ENCODE measurements at regions of chr20 and their contacts with region 1.

Region 1: DNA sequence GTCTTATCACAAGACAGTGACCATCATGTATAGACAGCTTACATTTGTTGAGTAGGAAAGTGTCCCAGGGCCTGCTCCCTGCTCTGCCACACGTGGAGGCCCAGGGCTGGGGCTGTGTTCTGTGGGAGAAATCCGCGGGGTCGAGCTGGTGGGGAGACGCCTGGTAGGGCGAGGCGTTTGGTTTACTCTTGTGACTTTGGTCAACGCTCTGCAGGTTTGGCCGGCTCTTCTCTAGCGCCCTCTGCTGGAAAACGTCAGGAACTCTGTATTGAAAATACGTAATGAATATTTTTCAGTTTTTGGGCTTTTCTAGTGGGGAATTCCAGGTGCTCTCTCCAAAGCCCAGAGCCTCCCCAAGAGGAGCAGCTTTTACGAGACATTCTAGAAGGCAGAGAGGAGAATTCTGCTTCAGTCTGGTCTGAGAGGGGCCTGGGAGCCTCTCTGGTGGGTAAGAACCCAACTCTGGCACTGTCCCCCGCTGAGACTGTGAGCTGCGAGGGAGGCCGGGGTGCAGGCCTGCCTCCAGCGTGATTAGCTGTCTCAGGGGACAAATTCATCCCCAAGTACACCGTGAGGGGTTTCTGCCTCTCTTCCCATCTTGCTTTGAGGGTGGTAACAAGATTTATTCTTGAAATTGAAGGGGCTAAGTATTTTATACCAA is 112.6 kb upstream of the RALGAPA2 start:
- DNase-seq: peak; percentile 35
- H3K4me3 ChIP-seq: no peak overlapping the region
- H3K27ac ChIP-seq: no peak overlapping the region
- H3K4me1 ChIP-seq: no peaks in the 10 kb centered on the region
- H3K27me3 ChIP-seq: no peaks in the 10 kb centered on the region
- CTCF ChIP-seq: peak; percentile 78 to 85 (median 82)
- POLR2A ChIP-seq: no peak

Region 2: DNA sequence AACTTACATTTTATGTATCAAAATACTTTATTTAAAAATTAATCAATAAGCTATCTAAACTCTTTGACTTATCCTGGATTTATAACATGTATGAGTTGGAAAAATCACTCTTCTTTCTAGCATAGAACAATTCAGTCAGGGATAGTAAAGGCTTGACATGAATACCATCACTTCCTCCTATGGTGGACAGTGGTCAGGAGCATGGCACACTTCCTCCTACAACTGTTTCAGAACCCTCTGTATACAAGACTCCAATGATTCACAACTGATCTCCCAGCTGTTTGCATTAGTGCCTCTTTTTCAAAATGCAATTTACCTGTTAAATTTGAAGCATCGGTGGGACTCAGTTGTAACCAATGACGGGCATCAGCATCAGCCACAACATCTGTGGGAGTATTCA is 242.3 kb before region 1 on chr20:
- intact Hi-C with region 1: no loop called
- DNase-seq: no peak
- H3K4me3 ChIP-seq: no peak overlapping the region
- H3K27ac ChIP-seq: no peak overlapping the region
- H3K4me1 ChIP-seq: no peaks in the 10 kb centered on the region
- H3K27me3 ChIP-seq: no peaks in the 10 kb centered on the region
- CTCF ChIP-seq: no peak
- POLR2A ChIP-seq: no peak

Region 3: GRCh38 chr20:20593447-20594170 is 231.4 kb before region 1 on chr20:
- intact Hi-C with region 1: loop called (anchors 10 kb)
- DNase-seq: peak; percentile 13
- H3K4me3 ChIP-seq: no peak overlapping the region
- H3K27ac ChIP-seq: peak overlapping the region in 1 of 2 donors; percentile 8
- H3K4me1 ChIP-seq: no peaks in the 10 kb centered on the region
- H3K27me3 ChIP-seq: no peaks in the 10 kb centered on the region
- CTCF ChIP-seq: peak in 3 of 4 experiments; percentile 24 to 49 (median 28)
- POLR2A ChIP-seq: no peak

Region 4: GRCh38 chr20:20606050-20606449 is 219.0 kb before region 1 on chr20:
- intact Hi-C with region 1: no loop called
- DNase-seq: no peak
- H3K4me3 ChIP-seq: no peak overlapping the region
- H3K27ac ChIP-seq: no peak overlapping the region
- H3K4me1 ChIP-seq: no peaks in the 10 kb centered on the region
- H3K27me3 ChIP-seq: no peaks in the 10 kb centered on the region
- CTCF ChIP-seq: no peak
- POLR2A ChIP-seq: no peak

Region 5: GRCh38 chr20:20664795-20665589 is 160.1 kb before region 1 on chr20:
- intact Hi-C with region 1: loop called (anchors 2 kb)
- DNase-seq: peak; percentile 20
- H3K4me3 ChIP-seq: no peak overlapping the region
- H3K27ac ChIP-seq: no peak overlapping the region
- H3K4me1 ChIP-seq: peaks cover 3% of the 10 kb centered on the region
- H3K27me3 ChIP-seq: no peaks in the 10 kb centered on the region
- CTCF ChIP-seq: peak in 2 of 4 experiments; percentile 43 to 58
- POLR2A ChIP-seq: no peak

Region 6: GRCh38 chr20:21156266-21156665 is 331.2 kb after region 1 on chr20:
- intact Hi-C with region 1: no loop called
- DNase-seq: no peak
- H3K4me3 ChIP-seq: no peak overlapping the region
- H3K27ac ChIP-seq: no peak overlapping the region
- H3K4me1 ChIP-seq: peaks cover 2% of the 10 kb centered on the region
- H3K27me3 ChIP-seq: no peaks in the 10 kb centered on the region
- CTCF ChIP-seq: no peak
- POLR2A ChIP-seq: no peak